Vagina (tissue), 2 donors: ENCODE measurements at regions of chr1 and their contacts with region 1.

Region 1: GRCh38 chr1:242579528-242580235 is 55.2 kb upstream of the PLD5 start:
- DNase-seq: no peak
- H3K4me3 ChIP-seq: no peak overlapping the region
- H3K27ac ChIP-seq: no peak overlapping the region
- H3K4me1 ChIP-seq: no peaks in the 10 kb centered on the region
- H3K27me3 ChIP-seq: no peaks in the 10 kb centered on the region
- CTCF ChIP-seq: no peak
- POLR2A ChIP-seq: no peak

Region 2: DNA sequence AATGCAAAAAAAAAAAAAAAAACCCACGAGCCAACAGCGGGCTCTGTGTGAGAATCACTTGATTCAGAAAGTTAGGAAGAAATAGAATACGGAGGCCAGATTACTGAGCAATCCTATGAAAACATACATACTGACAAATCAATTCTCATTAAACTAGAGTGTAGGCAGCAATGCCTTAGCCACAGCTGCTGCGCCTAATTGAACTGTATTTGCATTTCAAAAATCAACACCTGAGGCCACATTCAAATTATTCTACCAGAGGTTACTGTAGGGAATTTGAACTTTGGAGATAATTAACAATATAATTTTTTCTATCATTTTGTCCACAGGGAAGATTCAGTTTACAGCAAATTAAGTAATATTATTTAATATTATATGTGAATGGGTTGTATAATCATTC is 83.2 kb after region 1 on chr1:
- intact Hi-C with region 1: no loop called
- DNase-seq: no peak
- H3K4me3 ChIP-seq: no peak overlapping the region
- H3K27ac ChIP-seq: no peak overlapping the region
- H3K4me1 ChIP-seq: no peaks in the 10 kb centered on the region
- H3K27me3 ChIP-seq: no peaks in the 10 kb centered on the region
- CTCF ChIP-seq: no peak
- POLR2A ChIP-seq: no peak

Region 3: DNA sequence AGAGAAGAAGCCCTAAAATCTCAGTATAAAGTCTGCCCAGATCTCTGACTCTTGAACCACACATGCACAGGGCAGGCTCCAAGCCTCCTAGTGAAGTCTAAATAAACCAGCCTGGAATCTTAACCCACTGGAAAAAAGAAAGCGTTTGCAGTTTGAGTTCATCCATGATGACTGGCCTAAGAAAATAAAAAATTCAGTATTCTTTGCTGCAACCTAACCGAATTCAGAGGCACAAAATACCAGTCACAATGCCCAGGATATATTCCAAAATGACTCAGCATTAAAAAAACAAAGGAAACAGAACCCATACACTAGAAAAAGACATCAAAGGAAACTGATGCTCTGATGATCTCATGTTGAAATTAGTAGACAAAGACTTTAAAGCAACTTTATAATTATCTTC is 945.4 kb after region 1 on chr1:
- intact Hi-C with region 1: loop called (anchors 5 kb)
- DNase-seq: no peak
- H3K4me3 ChIP-seq: no peak overlapping the region
- H3K27ac ChIP-seq: no peak overlapping the region
- H3K4me1 ChIP-seq: no peaks in the 10 kb centered on the region
- H3K27me3 ChIP-seq: no peaks in the 10 kb centered on the region
- CTCF ChIP-seq: no peak
- POLR2A ChIP-seq: no peak